Ovary (tissue), 10 donors: ENCODE measurements at regions of chr1 and their contacts with region 1.

Region 1: DNA sequence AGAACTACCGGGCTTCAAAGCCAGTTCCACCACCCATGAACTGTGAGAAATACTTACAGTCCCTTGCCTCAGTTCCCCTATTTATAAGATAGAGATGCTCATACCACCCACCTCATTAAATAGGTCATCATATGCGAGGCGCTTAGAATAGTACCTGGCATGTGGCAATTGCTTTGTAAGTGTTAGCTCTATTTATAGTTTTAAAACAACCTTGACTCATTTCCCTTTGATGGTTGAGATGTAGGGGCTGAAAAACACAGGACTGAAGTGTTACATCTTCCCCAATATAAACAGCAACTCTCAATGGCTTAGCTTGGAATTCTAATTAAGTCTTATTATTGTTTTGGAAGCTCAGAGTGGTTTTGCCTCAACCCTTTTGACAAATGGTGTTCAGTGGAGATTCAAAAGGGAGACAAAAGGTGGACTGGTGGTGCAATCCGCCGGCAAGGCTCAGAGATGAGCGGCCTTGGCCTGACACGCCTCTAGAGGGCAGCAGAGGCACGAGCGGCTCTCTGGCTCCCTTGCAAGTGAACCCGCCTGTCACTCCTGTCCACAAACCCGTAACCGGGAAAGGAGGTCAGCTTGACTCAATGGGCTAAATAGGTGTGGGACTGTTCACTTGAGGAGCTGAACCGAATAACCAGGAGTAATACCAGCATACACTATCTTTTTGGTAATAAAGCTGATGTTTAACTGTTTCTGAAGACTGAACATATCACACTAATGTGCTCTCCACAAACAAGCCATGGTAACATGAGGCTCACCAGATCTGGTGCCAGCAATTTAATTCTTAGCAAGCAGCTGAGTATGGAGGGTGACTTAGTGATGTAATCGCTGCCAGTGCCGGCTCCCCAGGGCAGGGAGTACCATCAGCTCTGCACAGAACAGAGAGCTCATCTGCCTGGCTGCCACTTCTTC is 19.5 kb upstream of the SMYD2 start:
- DNase-seq: peak; percentile 69 to 83 (median 83)
- H3K4me3 ChIP-seq: no peak overlapping the region
- H3K27ac ChIP-seq: no peak overlapping the region
- H3K4me1 ChIP-seq: no peaks in the 10 kb centered on the region
- H3K27me3 ChIP-seq: no peaks in the 10 kb centered on the region
- CTCF ChIP-seq: peak; percentile 65 to 87 (median 79)
- EP300 ChIP-seq: no peak
- POLR2A ChIP-seq: no peak

Region 2: GRCh38 chr1:213015099-213016050 is 1246.1 kb before region 1 on chr1 and contains the start of gene ANGEL2:
- intact Hi-C with region 1: no loop called
- DNase-seq: peak; percentile 94 to 96 (median 95)
- H3K4me3 ChIP-seq: peak within 1 kb of the TSS; percentile 88
- H3K27ac ChIP-seq: peak within 1 kb of the TSS; percentile 66 to 89
- H3K4me1 ChIP-seq: peaks cover 3% of the 10 kb centered on the region
- H3K27me3 ChIP-seq: no peaks in the 10 kb centered on the region
- CTCF ChIP-seq: no peak
- EP300 ChIP-seq: no peak
- POLR2A ChIP-seq: peak; percentile 18
- total RNA-seq, gene ANGEL2: 29.9 to 51.3 (median 41.4) TPM

Region 3: DNA sequence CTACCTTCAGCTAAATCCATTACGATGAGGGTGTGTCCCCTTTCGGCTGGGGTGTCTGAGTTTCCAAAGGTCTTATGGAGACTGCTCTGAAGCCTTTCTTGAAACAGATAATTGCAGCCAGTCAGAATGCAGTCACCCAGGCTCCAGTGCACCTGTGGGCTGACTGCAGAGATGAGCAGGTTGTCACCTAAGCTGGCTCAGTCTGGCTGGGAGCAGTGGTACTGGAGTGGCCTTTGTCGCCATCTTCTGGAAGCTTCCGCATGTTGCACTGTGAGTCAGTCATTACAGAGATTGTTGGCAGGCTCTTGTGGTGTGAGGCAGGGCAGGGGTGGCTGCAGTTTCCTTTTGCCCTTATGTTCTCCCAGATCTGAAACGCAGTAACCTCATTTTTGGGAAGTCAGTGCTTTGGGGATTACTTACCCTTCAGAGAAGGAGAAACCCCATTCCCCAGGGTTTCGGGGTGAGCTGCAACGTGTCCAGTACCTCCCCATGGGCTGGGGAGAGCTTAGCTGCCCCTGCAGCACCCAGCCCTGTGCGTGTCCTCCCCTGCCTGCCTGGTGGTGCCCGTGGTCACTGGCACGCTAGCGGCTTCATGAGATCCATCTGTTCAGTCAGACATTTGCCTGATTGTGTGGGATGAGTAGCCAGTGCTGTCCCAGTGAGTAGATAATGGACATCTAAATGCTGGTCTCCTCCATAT is 67.5 kb after region 1 on chr1:
- intact Hi-C with region 1: loop called (anchors 2 to 5 kb)
- DNase-seq: peak; percentile 63 to 84 (median 78)
- H3K4me3 ChIP-seq: no peak overlapping the region
- H3K27ac ChIP-seq: no peak overlapping the region
- H3K4me1 ChIP-seq: peaks cover 1% of the 10 kb centered on the region
- H3K27me3 ChIP-seq: no peaks in the 10 kb centered on the region
- CTCF ChIP-seq: peak; percentile 69 to 84 (median 78)
- EP300 ChIP-seq: no peak
- POLR2A ChIP-seq: no peak

Region 4: DNA sequence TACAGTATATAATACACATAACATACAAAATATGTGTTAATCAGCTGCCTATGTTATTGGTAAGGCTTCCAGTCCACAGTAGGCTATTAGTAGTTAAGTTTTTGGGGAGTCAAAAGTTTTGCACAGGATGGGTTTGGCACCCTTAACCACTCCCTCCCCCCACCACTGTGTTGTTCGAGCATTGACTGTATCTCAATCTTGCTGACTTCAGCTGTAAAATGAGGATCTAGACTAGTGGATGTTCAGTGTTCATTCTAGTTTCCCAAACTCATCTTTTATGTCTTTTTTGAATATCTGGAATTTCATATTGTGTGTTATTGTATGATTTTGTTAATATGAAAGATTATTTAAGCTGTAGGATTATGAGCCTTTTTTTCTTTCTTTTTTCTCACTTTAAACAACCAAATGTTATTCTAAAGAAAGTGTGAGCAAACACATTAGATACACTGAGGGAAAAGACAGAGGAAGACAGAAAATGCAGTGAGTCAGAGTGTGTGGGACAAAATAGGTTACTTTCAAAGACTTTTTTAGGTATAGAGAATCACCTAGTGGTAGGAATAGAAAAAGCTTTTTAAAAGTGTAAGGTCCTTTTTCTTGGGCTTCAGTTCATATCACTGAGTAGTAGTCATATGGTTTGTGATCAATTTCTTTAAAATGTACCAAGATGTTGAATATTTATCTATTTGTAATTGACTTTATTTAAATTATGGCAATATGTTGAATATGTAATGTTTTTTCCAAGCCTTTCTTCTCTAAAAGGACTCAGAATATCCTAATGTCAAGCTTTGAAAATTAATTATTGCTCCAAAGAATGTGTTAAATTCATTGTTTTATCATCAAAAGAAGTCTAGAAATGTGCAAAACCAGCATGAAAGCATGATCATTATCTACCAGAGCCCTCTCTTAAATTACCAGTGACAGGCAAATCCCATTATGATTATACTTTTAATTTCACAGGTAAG is 323.6 kb after region 1 on chr1:
- intact Hi-C with region 1: loop called in 2 of 4 experiments (anchors 10 kb)
- DNase-seq: no peak
- H3K4me3 ChIP-seq: no peak overlapping the region
- H3K27ac ChIP-seq: no peak overlapping the region
- H3K4me1 ChIP-seq: no peaks in the 10 kb centered on the region
- H3K27me3 ChIP-seq: no peaks in the 10 kb centered on the region
- CTCF ChIP-seq: peak in 2 of 3 donors; percentile 70 to 73
- EP300 ChIP-seq: no peak
- POLR2A ChIP-seq: no peak